ENCODE measurements at regions of chr2 and their contacts with region 1.

Region 1: GRCh38 chr2:101151141-101151858 is at the start of gene TBC1D8:
- DNase-seq: peak; percentile 91 to 96
- ATAC-seq: peak; percentile 74 to 80 (median 75)
- H3K4me3 ChIP-seq: peak within 1 kb of the TSS; percentile 88
- H3K27ac ChIP-seq: peak within 1 kb of the TSS; percentile 89
- H3K4me1 ChIP-seq: peaks cover 57% of the 10 kb centered on the region
- H3K27me3 ChIP-seq: no peaks in the 10 kb centered on the region
- CTCF ChIP-seq: no peak
- total RNA-seq, gene TBC1D8: 8.7 to 163 (median 57.0) TPM

Region 2: GRCh38 chr2:101012706-101013181 is 138.6 kb before region 1 on chr2:
- intact Hi-C with region 1: loop called (anchors 2 to 5 kb)
- DNase-seq: no peak
- ATAC-seq: peak in 3 of 4 donors; percentile 11 to 22 (median 18)
- H3K4me3 ChIP-seq: no peak overlapping the region
- H3K27ac ChIP-seq: no peak overlapping the region
- H3K4me1 ChIP-seq: peaks cover 4% of the 10 kb centered on the region
- H3K27me3 ChIP-seq: no peaks in the 10 kb centered on the region
- CTCF ChIP-seq: peak; percentile 88

Region 3: GRCh38 chr2:101036562-101037457 is 114.5 kb before region 1 on chr2:
- intact Hi-C with region 1: loop called in 1 of 2 experiments (anchors 2 kb)
- DNase-seq: no peak
- ATAC-seq: peak in 1 of 4 donors; percentile 3
- H3K4me3 ChIP-seq: no peak overlapping the region
- H3K27ac ChIP-seq: no peak overlapping the region
- H3K4me1 ChIP-seq: no peaks in the 10 kb centered on the region
- H3K27me3 ChIP-seq: no peaks in the 10 kb centered on the region
- CTCF ChIP-seq: peak; percentile 48

Region 4: DNA sequence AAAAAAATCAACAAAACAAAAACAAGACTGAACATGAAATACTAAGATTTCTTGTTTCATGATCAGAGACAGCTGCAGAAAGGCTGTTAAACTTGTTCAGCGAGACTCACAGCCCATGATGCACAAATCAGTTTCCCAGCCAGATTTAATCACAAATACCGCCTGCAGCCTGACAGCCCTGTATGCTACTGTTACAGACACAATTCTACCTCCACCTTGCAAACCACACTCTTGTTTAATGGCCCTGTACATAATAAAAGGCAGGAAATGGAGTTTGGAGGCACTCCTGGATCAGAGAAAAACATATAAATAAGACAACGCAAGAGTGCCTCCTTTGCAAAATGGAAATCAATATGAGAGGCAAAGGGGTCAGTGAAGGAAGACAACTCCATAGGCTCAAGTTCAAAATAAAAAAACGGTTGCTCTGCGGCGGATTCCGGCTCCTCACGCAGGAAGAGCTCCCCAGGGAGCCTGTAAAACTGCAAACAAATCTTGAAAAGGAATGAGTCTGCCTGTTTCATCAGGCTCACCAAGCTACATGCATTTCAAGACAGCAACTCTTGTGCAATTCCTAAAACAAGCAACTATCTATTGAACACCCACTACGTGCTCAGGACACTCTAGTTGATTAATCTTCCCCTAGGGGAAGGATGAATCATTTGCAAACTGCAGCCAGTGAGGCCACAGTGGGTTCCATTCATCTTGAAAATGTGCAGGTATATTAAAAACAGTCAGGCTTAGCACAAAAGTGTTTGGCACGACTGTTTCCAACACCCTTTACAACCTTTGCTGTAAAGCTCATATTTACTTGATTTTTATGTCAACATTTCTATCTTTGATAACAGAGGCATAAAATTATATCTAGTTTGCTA is 37.7 kb before region 1 on chr2:
- intact Hi-C with region 1: loop called (anchors 5 kb)
- DNase-seq: no peak
- ATAC-seq: peak; percentile 19 to 47 (median 38)
- H3K4me3 ChIP-seq: no peak overlapping the region
- H3K27ac ChIP-seq: peak overlapping the region; percentile 94
- H3K4me1 ChIP-seq: peaks cover 81% of the 10 kb centered on the region
- H3K27me3 ChIP-seq: no peaks in the 10 kb centered on the region
- CTCF ChIP-seq: no peak